ENCODE measurements at regions of chr6 and their contacts with region 1.

Region 1: GRCh38 chr6:130009146-130009545 is 9.2 kb upstream of the L3MBTL3 start:
- DNase-seq: no peak
- ATAC-seq: no peak
- H3K4me3 ChIP-seq: no peak overlapping the region
- H3K27ac ChIP-seq: no peak overlapping the region
- H3K4me1 ChIP-seq: no peaks in the 10 kb centered on the region
- H3K27me3 ChIP-seq: no peaks in the 10 kb centered on the region
- CTCF ChIP-seq: no peak
- POLR2A ChIP-seq: no peak

Region 2: GRCh38 chr6:129992881-129993280 is 16.3 kb before region 1 on chr6:
- intact Hi-C with region 1: loop called in 1 of 10 experiments (anchors 2 kb)
- DNase-seq: no peak
- ATAC-seq: no peak
- H3K4me3 ChIP-seq: no peak overlapping the region
- H3K27ac ChIP-seq: no peak overlapping the region
- H3K4me1 ChIP-seq: no peaks in the 10 kb centered on the region
- H3K27me3 ChIP-seq: peaks cover 0 to 2% (median 0%) of the 10 kb centered on the region in 9 donors
- CTCF ChIP-seq: no peak
- POLR2A ChIP-seq: no peak